ENCODE measurements at regions of chr17 and their contacts with region 1.

Region 1: DNA sequence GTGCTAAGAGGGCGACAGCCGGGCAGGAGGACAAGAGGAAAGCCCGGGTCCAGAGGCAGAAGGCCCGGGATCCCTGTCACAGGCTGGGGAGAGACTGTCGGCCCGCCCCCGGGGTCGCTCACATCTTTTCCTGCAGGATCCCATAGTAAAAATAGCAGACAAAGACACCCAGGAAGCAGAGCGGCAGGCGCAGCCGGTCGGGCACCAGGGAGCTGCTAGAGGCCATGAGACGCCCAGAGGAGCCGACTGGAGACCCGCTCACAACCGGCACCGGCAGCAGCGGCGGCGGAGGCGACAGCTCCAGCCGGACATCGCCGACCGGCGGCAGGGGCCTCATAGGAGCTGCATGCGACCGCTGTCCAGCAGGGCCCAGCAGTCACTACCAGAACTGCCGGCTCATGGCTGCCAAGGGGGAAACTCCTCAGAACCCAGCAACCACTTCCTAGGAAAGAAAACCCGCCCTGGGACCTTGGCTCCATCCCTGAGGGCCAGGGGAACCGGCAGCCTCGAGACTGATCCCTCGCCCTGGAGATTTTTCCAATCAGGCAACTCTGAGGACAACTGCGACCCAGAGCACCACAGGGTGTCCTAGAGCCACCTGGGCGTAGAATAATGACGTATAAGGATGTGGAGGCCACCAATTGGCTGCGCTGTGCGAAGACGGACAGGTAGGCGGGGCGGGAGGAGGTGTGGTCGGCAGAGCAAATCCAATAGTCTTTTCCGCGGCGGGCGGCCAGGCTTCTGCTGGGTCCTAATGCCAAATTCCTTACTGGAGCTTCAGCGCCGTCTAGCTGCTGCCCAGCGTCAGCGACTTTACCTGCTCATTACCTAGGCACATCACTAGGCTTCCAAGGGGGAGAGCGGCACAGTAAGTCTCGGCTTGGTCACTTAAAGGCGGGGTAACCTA is at the start of gene SLC35B1:
- DNase-seq: peak; percentile 96 to 99 (median 98)
- ATAC-seq: peak; percentile 97
- H3K4me3 ChIP-seq: peak within 1 kb of the TSS; percentile 81
- H3K4me3 Mint-ChIP-seq: peak within 1 kb of the TSS; percentile 99
- H3K27ac ChIP-seq: peak within 1 kb of the TSS; percentile 83 to 94
- H3K27ac Mint-ChIP-seq: peak within 1 kb of the TSS; percentile 87
- H3K4me1 ChIP-seq: peaks cover 34% of the 10 kb centered on the region
- H3K4me1 Mint-ChIP-seq: peaks cover 49% of the 10 kb centered on the region
- H3K27me3 ChIP-seq: no peaks in the 10 kb centered on the region
- H3K27me3 Mint-ChIP-seq: no peaks in the 10 kb centered on the region
- CTCF ChIP-seq: peak; percentile 82
- total RNA-seq, gene SLC35B1: 44.0 to 46.8 TPM

Region 2: GRCh38 chr17:49694847-49695683 is 12.8 kb before region 1 on chr17:
- CTCF ChIA-PET with region 1: interaction called, 11 read pairs
- POLR2A ChIA-PET with region 1: interaction called, 16 read pairs
- intact Hi-C with region 1: no loop called
- DNase-seq: peak; percentile 54 to 81 (median 68)
- ATAC-seq: peak; percentile 63
- H3K4me3 ChIP-seq: no peak overlapping the region
- H3K4me3 Mint-ChIP-seq: no peak overlapping the region
- H3K27ac ChIP-seq: no peak overlapping the region
- H3K27ac Mint-ChIP-seq: peak overlapping the region; percentile 91
- H3K4me1 ChIP-seq: peaks cover 32% of the 10 kb centered on the region
- H3K4me1 Mint-ChIP-seq: peaks cover 54% of the 10 kb centered on the region
- H3K27me3 ChIP-seq: no peaks in the 10 kb centered on the region
- H3K27me3 Mint-ChIP-seq: no peaks in the 10 kb centered on the region
- CTCF ChIP-seq: peak; percentile 92

Region 3: GRCh38 chr17:49748791-49749190 is 40.9 kb after region 1 on chr17:
- CTCF ChIA-PET with region 1: interaction called, 19 read pairs
- POLR2A ChIA-PET with region 1: interaction called, 27 read pairs
- intact Hi-C with region 1: no loop called
- DNase-seq: peak; percentile 25 to 87 (median 52)
- ATAC-seq: peak; percentile 76
- H3K4me3 ChIP-seq: no peak overlapping the region
- H3K4me3 Mint-ChIP-seq: peak overlapping the region; percentile 72
- H3K27ac ChIP-seq: peak overlapping the region; percentile 87 to 94
- H3K27ac Mint-ChIP-seq: peak overlapping the region; percentile 97
- H3K4me1 ChIP-seq: peaks cover 90% of the 10 kb centered on the region
- H3K4me1 Mint-ChIP-seq: peaks cover 77% of the 10 kb centered on the region
- H3K27me3 ChIP-seq: no peaks in the 10 kb centered on the region
- H3K27me3 Mint-ChIP-seq: no peaks in the 10 kb centered on the region
- CTCF ChIP-seq: no peak

Region 4: DNA sequence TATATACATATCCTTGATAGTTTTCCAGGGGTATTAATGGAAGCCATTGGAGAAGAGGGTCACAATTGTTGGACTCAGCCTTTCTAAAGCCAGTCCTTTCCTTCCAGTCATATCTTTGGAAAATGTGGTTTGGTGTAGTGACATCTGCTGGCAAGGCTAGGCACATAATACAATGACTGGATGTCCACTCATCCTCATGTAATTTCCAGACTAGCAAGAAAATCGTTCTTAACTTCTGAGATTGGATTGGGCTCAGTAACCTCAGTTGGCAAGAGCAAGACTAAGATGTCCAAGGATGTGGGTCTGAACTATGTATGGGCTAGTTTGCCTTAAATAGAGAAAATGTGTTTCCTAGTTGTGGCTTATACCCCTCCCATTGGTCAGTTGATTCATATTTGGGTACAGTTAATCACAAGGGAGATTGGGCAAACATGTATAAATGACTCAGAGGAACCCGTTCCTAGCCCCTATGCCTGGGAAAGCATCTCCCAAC is 71.9 kb after region 1 on chr17:
- CTCF ChIA-PET with region 1: interaction called, 6 read pairs
- POLR2A ChIA-PET with region 1: interaction called, 14 read pairs
- intact Hi-C with region 1: loop called in 1 of 2 experiments (anchors 2 kb)
- DNase-seq: peak in 7 of 14 experiments; percentile 16 to 68 (median 55)
- ATAC-seq: peak; percentile 44
- H3K4me3 ChIP-seq: no peak overlapping the region
- H3K4me3 Mint-ChIP-seq: no peak overlapping the region
- H3K27ac ChIP-seq: no peak overlapping the region
- H3K27ac Mint-ChIP-seq: no peak overlapping the region
- H3K4me1 ChIP-seq: peaks cover 3% of the 10 kb centered on the region
- H3K4me1 Mint-ChIP-seq: no peaks in the 10 kb centered on the region
- H3K27me3 ChIP-seq: no peaks in the 10 kb centered on the region
- H3K27me3 Mint-ChIP-seq: no peaks in the 10 kb centered on the region
- CTCF ChIP-seq: peak; percentile 66

Region 5: DNA sequence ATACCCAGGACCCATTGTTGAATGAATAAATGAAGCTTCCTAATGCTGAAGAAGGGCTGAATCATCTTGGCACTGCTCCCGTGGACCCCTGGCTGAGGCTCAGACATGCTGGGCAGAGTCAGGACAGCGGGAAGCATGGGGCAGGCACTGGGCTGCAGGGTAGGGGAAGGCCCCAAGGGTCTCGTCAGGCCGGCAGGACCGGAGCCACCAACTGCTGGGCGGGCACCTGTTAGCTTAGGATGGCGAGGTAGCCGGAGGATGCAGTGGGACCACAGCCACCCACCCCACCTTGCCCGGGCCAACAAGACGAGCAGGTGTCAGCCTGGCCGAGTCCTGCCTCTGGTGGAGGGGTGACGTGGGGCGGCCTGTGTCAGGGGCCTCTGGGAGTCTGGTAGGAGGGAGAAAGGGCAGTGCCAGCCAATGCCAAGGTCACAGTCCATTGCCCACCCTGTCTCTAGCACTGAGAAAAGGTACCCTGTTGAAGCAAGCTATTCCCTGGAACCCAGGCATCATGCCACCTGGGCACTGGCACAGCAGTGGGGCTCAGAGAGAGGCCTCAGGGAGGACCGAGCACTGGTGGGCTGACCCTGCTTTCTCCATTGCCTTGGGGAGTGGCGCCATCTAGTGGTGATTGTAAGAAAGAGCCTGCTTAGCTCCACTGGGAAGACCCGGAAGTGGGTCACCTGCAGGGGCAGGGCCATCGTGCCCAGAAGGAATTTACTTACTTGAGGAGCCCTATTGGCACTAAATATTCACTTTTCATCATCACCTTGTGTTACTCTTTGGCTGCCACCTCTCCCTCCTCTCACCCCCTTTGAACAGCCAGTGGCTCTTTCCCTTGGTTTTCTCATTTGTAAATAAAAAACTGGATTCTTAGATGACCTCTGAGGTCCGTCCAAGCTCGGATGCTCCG is 290.2 kb after region 1 on chr17:
- CTCF ChIA-PET with region 1: no interaction called
- POLR2A ChIA-PET with region 1: no interaction called
- intact Hi-C with region 1: loop called in 1 of 2 experiments (anchors 10 kb)
- DNase-seq: peak; percentile 68 to 94 (median 78)
- ATAC-seq: peak; percentile 83
- H3K4me3 ChIP-seq: no peak overlapping the region
- H3K4me3 Mint-ChIP-seq: no peak overlapping the region
- H3K27ac ChIP-seq: no peak overlapping the region
- H3K27ac Mint-ChIP-seq: no peak overlapping the region
- H3K4me1 ChIP-seq: peaks cover 44% of the 10 kb centered on the region
- H3K4me1 Mint-ChIP-seq: peaks cover 39% of the 10 kb centered on the region
- H3K27me3 ChIP-seq: peaks cover 71 to 82% of the 10 kb centered on the region in 2 experiments
- H3K27me3 Mint-ChIP-seq: peaks cover 84% of the 10 kb centered on the region
- CTCF ChIP-seq: peak; percentile 94